ENCODE measurements at regions of chr12 and their contacts with region 1.

Region 1: GRCh38 chr12:102769319-102769916 is 147.6 kb downstream of the PAH start:
- DNase-seq: peak; percentile 40
- ATAC-seq: peak; percentile 96
- H3K4me3 ChIP-seq: no peak overlapping the region
- H3K27ac ChIP-seq: no peak overlapping the region
- H3K4me1 ChIP-seq: no peaks in the 10 kb centered on the region
- H3K27me3 ChIP-seq: no peaks in the 10 kb centered on the region
- CTCF ChIP-seq: peak; percentile 80 to 87 (median 82)
- EP300 ChIP-seq: no peak
- POLR2A ChIP-seq: no peak
- RAD21 ChIP-seq: peak; percentile 96

Region 2: DNA sequence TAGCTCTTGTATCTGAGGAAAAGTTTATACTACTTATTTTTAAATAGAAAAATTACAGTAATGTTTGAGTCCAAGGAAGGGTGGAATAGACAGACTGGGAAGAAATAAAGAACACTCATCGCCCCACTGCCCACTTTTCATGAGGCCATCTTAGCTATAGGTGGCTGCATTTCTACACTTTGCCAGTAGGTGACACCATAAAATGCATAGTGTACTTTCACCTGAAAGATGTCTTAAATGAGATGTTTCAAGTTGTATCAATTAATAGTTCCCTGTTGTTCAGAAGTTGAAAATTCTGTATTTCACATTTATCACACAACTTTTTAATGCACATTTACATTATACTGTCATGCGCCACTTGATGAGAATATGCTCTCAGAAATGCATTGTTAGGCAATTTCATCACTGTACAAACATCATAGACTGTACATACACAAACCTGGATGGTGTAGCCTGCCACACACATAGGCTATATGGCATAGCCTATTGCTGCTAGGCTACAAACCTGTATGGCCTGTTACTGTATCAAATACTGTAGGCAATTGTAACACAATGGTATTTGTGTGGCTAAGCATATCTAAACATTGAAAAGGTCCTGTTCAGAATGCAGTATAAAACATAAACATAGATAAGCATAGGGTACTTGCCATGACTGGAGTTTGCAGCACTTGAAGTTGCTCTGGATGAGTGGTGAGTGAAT is 599.3 kb before region 1 on chr12:
- CTCF ChIA-PET with region 1: interaction called, 20 read pairs
- POLR2A ChIA-PET with region 1: interaction called, 3 read pairs
- RAD21 ChIA-PET with region 1: interaction called, 18 read pairs
- SMC1A ChIA-PET with region 1: interaction called, 5 read pairs
- in situ Hi-C with region 1: no loop called
- intact Hi-C with region 1: loop called (anchors 5 kb)
- DNase-seq: no peak
- ATAC-seq: peak; percentile 73
- H3K4me3 ChIP-seq: no peak overlapping the region
- H3K27ac ChIP-seq: no peak overlapping the region
- H3K4me1 ChIP-seq: peaks cover 5% of the 10 kb centered on the region
- H3K27me3 ChIP-seq: no peaks in the 10 kb centered on the region
- CTCF ChIP-seq: peak; percentile 72 to 79 (median 78)
- EP300 ChIP-seq: no peak
- POLR2A ChIP-seq: no peak
- RAD21 ChIP-seq: peak; percentile 80

Region 3: DNA sequence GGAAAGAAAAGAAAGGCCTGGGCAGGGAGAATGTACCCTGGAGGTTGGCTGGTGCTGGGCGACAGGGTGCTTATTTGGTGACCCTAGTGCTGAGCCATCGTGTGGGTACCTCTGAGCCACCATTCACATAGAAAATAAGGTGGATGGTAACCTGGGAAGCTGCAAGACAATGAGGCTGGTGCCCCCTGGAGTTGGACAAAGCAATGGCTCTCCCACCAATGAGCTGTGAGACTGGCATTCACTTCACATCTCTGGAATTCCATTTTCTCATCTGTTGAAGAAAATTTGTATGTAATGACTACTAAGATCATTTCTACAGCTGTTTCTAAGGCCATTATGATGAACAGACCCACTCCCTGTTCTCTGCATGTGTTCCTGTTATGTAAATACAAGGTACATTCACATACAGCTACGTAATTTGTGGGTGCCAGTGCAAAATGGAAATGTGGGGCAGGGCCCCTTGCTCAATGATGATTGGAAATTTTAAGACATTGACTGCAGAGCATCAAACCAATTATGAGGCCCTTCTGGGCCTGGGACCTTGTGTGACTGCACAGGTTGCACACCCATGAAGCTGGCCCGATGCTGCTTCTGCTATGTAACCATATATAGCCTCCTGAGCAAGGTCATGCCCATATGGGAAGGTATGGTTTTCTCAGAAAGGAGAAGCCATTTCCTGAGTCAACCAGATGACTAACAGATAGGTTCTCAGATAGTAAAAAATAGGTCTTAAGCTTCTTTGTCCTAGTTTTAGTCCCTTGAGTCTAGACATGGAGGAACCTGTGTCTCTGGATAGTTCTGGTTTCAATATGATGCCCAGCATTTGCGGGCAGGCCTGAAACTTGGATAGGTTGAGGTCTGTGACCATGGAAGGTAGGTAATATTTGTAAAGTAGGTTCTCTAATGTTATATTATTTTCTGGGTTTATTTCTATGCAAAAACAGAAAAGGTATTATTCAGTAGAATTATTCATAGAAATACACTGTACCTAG is 225.6 kb before region 1 on chr12:
- CTCF ChIA-PET with region 1: interaction called, 16 read pairs
- POLR2A ChIA-PET with region 1: no interaction called
- RAD21 ChIA-PET with region 1: no interaction called
- SMC1A ChIA-PET with region 1: interaction called, 6 read pairs
- in situ Hi-C with region 1: no loop called
- intact Hi-C with region 1: no loop called
- DNase-seq: no peak
- ATAC-seq: peak; percentile 80
- H3K4me3 ChIP-seq: no peak overlapping the region
- H3K27ac ChIP-seq: no peak overlapping the region
- H3K4me1 ChIP-seq: peaks cover 6% of the 10 kb centered on the region
- H3K27me3 ChIP-seq: no peaks in the 10 kb centered on the region
- CTCF ChIP-seq: peak; percentile 42 to 46 (median 45); a peak in 5 of 6 replicates
- EP300 ChIP-seq: no peak
- POLR2A ChIP-seq: no peak
- RAD21 ChIP-seq: peak; percentile 62

Region 4: GRCh38 chr12:102685841-102686240 is 83.6 kb before region 1 on chr12:
- CTCF ChIA-PET with region 1: no interaction called
- POLR2A ChIA-PET with region 1: no interaction called
- RAD21 ChIA-PET with region 1: no interaction called
- SMC1A ChIA-PET with region 1: no interaction called
- in situ Hi-C with region 1: no loop called
- intact Hi-C with region 1: no loop called
- DNase-seq: no peak
- ATAC-seq: no peak
- H3K4me3 ChIP-seq: no peak overlapping the region
- H3K27ac ChIP-seq: no peak overlapping the region
- H3K4me1 ChIP-seq: no peaks in the 10 kb centered on the region
- H3K27me3 ChIP-seq: no peaks in the 10 kb centered on the region
- CTCF ChIP-seq: no peak
- EP300 ChIP-seq: no peak
- POLR2A ChIP-seq: no peak
- RAD21 ChIP-seq: no peak

Region 5: DNA sequence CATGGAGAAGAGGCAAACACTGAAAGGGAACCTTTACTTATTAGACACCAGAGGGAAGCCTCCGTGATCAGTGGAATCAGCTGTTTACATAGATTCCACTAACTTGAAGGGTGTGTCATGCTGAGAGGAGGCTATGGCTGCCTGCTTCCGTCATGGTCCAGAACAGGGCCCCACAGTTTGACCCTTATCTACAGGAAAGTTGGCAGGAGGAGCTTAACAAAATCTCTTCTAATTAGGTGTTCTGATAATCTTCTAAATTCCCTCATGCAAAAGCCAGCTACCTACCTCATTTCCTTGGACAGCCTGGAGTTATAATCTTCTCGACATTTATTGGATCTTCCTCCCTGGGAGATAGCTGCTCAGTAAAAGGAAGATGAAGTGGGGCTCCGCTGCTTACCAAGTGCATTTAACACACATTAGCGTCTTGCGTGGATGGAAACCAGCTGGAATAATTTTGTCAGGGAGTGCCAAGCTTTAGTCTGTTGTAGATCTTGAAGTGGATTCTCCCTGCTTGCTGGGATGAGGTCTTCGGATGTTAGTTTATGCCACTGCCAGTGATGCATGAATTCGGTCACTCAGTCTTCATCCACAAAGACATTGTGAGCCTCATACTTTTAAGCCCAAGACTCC is 23.3 kb before region 1 on chr12:
- CTCF ChIA-PET with region 1: interaction called, 43 read pairs
- POLR2A ChIA-PET with region 1: interaction called, 3 read pairs
- RAD21 ChIA-PET with region 1: interaction called, 32 read pairs
- SMC1A ChIA-PET with region 1: interaction called, 32 read pairs
- in situ Hi-C with region 1: no loop called
- intact Hi-C with region 1: no loop called
- DNase-seq: no peak
- ATAC-seq: no peak
- H3K4me3 ChIP-seq: no peak overlapping the region
- H3K27ac ChIP-seq: no peak overlapping the region
- H3K4me1 ChIP-seq: no peaks in the 10 kb centered on the region
- H3K27me3 ChIP-seq: no peaks in the 10 kb centered on the region
- CTCF ChIP-seq: no peak
- EP300 ChIP-seq: no peak
- POLR2A ChIP-seq: no peak
- RAD21 ChIP-seq: no peak

Region 6: DNA sequence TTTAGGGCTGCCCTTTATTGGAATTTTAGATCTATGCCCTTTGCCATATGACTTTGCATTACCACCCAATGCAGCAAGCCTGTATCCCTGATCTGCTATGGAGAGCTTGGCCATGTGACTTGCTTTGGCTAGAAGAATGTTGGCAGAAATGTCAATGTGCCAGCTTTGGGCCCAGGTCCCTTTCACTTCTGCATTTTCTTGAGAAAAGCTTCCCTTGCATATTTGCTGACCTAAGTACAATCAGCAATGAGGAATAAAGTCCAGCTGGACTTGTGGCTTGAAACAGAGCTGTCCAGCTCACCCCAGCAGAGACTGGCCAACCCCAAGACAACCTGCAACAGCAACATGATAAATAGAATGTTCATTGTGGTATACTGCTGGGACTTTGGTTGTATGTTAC is 11.7 kb after region 1 on chr12:
- CTCF ChIA-PET with region 1: interaction called, 10 read pairs
- POLR2A ChIA-PET with region 1: interaction called, 7 read pairs
- RAD21 ChIA-PET with region 1: interaction called, 11 read pairs
- SMC1A ChIA-PET with region 1: interaction called, 33 read pairs
- in situ Hi-C with region 1: no loop called
- intact Hi-C with region 1: no loop called
- DNase-seq: no peak
- ATAC-seq: no peak
- H3K4me3 ChIP-seq: no peak overlapping the region
- H3K27ac ChIP-seq: no peak overlapping the region
- H3K4me1 ChIP-seq: no peaks in the 10 kb centered on the region
- H3K27me3 ChIP-seq: no peaks in the 10 kb centered on the region; a peak in 1 of 4 replicates
- CTCF ChIP-seq: no peak
- EP300 ChIP-seq: no peak
- POLR2A ChIP-seq: no peak
- RAD21 ChIP-seq: no peak

Region 7: DNA sequence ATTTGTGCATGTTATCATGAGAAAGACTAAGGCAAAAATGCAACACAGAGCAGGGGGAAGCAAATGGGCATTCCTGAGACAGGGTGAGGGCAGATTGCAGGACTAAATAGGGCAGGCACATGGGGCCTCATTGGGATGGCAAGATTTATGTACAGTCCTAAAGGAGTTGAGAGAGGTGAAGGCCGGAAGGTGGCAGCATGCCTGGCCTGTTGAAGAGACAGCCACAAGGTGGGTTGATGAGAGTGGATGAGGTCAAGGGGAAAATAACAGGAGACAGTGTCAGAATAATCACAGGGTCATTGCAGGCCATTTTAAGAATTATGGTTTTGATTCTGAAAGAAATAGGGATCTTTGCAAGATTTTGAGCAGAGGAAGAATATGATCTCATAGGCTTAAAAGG is 126.6 kb after region 1 on chr12:
- CTCF ChIA-PET with region 1: no interaction called
- POLR2A ChIA-PET with region 1: no interaction called
- RAD21 ChIA-PET with region 1: no interaction called
- SMC1A ChIA-PET with region 1: no interaction called
- in situ Hi-C with region 1: no loop called
- intact Hi-C with region 1: no loop called
- DNase-seq: no peak
- ATAC-seq: peak; percentile 81
- H3K4me3 ChIP-seq: no peak overlapping the region
- H3K27ac ChIP-seq: no peak overlapping the region
- H3K4me1 ChIP-seq: no peaks in the 10 kb centered on the region
- H3K27me3 ChIP-seq: 0 out of 4 replicates have a peak, but pooled peaks cover 0 to 2% of the 10 kb centered on the region in 2 experiments
- CTCF ChIP-seq: peak in 2 of 3 experiments; percentile 13 to 34; a peak in 2 of 6 replicates
- EP300 ChIP-seq: no peak
- POLR2A ChIP-seq: no peak
- RAD21 ChIP-seq: no peak

Region 8: GRCh38 chr12:103102225-103102744 is 332.9 kb after region 1 on chr12:
- CTCF ChIA-PET with region 1: no interaction called
- POLR2A ChIA-PET with region 1: no interaction called
- RAD21 ChIA-PET with region 1: no interaction called
- SMC1A ChIA-PET with region 1: no interaction called
- in situ Hi-C with region 1: no loop called
- intact Hi-C with region 1: no loop called
- DNase-seq: peak; percentile 72
- ATAC-seq: peak; percentile 91
- H3K4me3 ChIP-seq: no peak overlapping the region
- H3K27ac ChIP-seq: peak overlapping the region; percentile 82
- H3K4me1 ChIP-seq: peaks cover 29% of the 10 kb centered on the region
- H3K27me3 ChIP-seq: no peaks in the 10 kb centered on the region
- CTCF ChIP-seq: no peak
- EP300 ChIP-seq: peak; percentile 73 to 89; a peak in 3 of 4 replicates
- POLR2A ChIP-seq: no peak
- RAD21 ChIP-seq: peak; percentile 22; the same call in 1 of the 2 replicates

Measured in GM12878 (cell line).